SK-N-SH (cell line): ENCODE measurements at regions of chr11 and their contacts with region 1.

Region 1: GRCh38 chr11:123110356-123110755 is 48.4 kb upstream of the HSPA8 start:
- DNase-seq: no peak
- H3K4me3 ChIP-seq: no peak overlapping the region
- H3K27ac ChIP-seq: no peak overlapping the region
- H3K4me1 ChIP-seq: peaks cover 4 to 21% of the 10 kb centered on the region in 2 experiments; a peak in 3 of 4 replicates
- H3K27me3 ChIP-seq: no peaks in the 10 kb centered on the region
- CTCF ChIP-seq: no peak
- EP300 ChIP-seq: no peak
- RAD21 ChIP-seq: no peak

Region 2: DNA sequence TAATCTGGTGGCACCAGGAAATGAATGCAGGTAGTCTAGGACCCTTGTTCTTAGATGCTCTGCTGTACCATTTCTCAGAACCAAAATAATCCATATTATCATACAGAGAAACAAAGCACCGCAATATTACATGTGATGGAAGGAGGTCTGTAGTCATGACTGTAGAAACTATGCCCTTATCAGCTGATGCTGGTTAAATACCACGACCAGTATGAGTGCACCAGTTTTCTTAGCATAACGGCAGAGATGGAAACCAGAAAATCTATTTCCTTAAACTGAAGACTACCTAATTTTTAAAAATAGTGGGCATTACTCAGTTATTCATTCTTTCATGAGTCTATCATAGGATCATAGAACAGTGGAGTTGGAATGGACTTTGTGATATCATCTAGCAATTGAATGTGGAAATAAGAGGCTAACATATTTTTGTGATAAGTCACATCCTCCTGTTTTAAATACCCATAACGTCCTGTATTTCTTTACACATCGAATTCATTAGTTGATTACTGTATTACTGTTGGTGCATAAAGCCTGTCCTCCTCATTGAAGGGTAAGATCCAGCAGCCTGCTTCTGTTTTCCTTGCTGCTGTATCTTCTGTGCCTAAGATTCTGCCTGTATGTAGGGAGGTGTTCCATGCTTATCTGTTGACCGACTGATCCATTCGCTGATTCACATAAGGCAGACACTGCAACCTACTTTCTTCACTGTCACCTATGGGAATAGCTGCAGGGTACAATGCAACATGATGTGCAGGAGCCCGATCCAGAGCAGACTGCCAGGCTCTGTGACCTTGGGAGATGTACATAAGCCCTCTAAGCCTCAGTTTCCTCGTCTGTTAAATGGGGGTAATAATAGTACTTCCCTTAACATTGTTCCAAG is 212.5 kb before region 1 on chr11:
- CTCF ChIA-PET with region 1: no interaction called
- POLR2A ChIA-PET with region 1: no interaction called
- DNase-seq: no peak
- H3K4me3 ChIP-seq: no peak overlapping the region
- H3K27ac ChIP-seq: peak overlapping the region in 1 of 2 experiments; percentile 36; a peak in 2 of 4 replicates
- H3K4me1 ChIP-seq: no peaks in the 10 kb centered on the region; a peak in 1 of 4 replicates
- H3K27me3 ChIP-seq: no peaks in the 10 kb centered on the region
- CTCF ChIP-seq: no peak
- EP300 ChIP-seq: 0 out of 4 replicates have a peak, but pooled peaks of 1 of the 2 experiments have one; percentile 16
- RAD21 ChIP-seq: no peak

Region 3: GRCh38 chr11:123006860-123007542 is 103.4 kb before region 1 on chr11:
- CTCF ChIA-PET with region 1: no interaction called
- POLR2A ChIA-PET with region 1: no interaction called
- DNase-seq: no peak
- H3K4me3 ChIP-seq: no peak overlapping the region
- H3K27ac ChIP-seq: no peak overlapping the region
- H3K4me1 ChIP-seq: no peaks in the 10 kb centered on the region
- H3K27me3 ChIP-seq: no peaks in the 10 kb centered on the region
- CTCF ChIP-seq: no peak
- EP300 ChIP-seq: no peak
- RAD21 ChIP-seq: no peak

Region 4: GRCh38 chr11:123122341-123122740 is 12.0 kb after region 1 on chr11:
- CTCF ChIA-PET with region 1: interaction called, 24 read pairs
- POLR2A ChIA-PET with region 1: no interaction called
- DNase-seq: peak; percentile 48
- H3K4me3 ChIP-seq: no peak overlapping the region
- H3K27ac ChIP-seq: peak overlapping the region; percentile 66 to 77
- H3K4me1 ChIP-seq: peaks cover 9 to 28% of the 10 kb centered on the region in 2 experiments; a peak in 2 of 4 replicates
- H3K27me3 ChIP-seq: no peaks in the 10 kb centered on the region
- CTCF ChIP-seq: no peak
- EP300 ChIP-seq: no peak
- RAD21 ChIP-seq: no peak

Region 5: GRCh38 chr11:123145220-123145619 is 34.9 kb after region 1 on chr11:
- CTCF ChIA-PET with region 1: interaction called, 11 read pairs
- POLR2A ChIA-PET with region 1: interaction called, 7 read pairs
- DNase-seq: peak; percentile 66
- H3K4me3 ChIP-seq: peak overlapping the region; percentile 21 to 49; a peak in 3 of 4 replicates
- H3K27ac ChIP-seq: peak overlapping the region; percentile 87 to 95
- H3K4me1 ChIP-seq: peaks cover 9 to 17% of the 10 kb centered on the region in 2 experiments
- H3K27me3 ChIP-seq: no peaks in the 10 kb centered on the region
- CTCF ChIP-seq: no peak
- EP300 ChIP-seq: peak in 1 of 2 experiments; percentile 29; a peak in 1 of 4 replicates
- RAD21 ChIP-seq: no peak

Region 6: GRCh38 chr11:123183391-123184099 is 73.2 kb after region 1 on chr11:
- CTCF ChIA-PET with region 1: interaction called, 16 read pairs
- POLR2A ChIA-PET with region 1: no interaction called
- DNase-seq: no peak
- H3K4me3 ChIP-seq: no peak overlapping the region
- H3K27ac ChIP-seq: no peak overlapping the region
- H3K4me1 ChIP-seq: peaks cover 16 to 71% of the 10 kb centered on the region in 2 experiments
- H3K27me3 ChIP-seq: no peaks in the 10 kb centered on the region
- CTCF ChIP-seq: no peak
- EP300 ChIP-seq: no peak
- RAD21 ChIP-seq: no peak

Region 7: GRCh38 chr11:123255909-123256308 is 145.6 kb after region 1 on chr11:
- CTCF ChIA-PET with region 1: interaction called, 102 read pairs
- POLR2A ChIA-PET with region 1: no interaction called
- DNase-seq: no peak
- H3K4me3 ChIP-seq: no peak overlapping the region
- H3K27ac ChIP-seq: no peak overlapping the region
- H3K4me1 ChIP-seq: peaks cover 0 to 3% of the 10 kb centered on the region in 2 experiments; a peak in 2 of 4 replicates
- H3K27me3 ChIP-seq: no peaks in the 10 kb centered on the region
- CTCF ChIP-seq: no peak
- EP300 ChIP-seq: no peak
- RAD21 ChIP-seq: no peak

Region 8: GRCh38 chr11:123316003-123316402 is 205.6 kb after region 1 on chr11:
- CTCF ChIA-PET with region 1: no interaction called
- POLR2A ChIA-PET with region 1: no interaction called
- DNase-seq: no peak
- H3K4me3 ChIP-seq: no peak overlapping the region
- H3K27ac ChIP-seq: no peak overlapping the region
- H3K4me1 ChIP-seq: peaks cover 0 to 2% of the 10 kb centered on the region in 2 experiments; a peak in 2 of 4 replicates
- H3K27me3 ChIP-seq: no peaks in the 10 kb centered on the region; the same call in 1 of the 2 replicates
- CTCF ChIP-seq: no peak
- EP300 ChIP-seq: no peak
- RAD21 ChIP-seq: no peak